Body of pancreas (tissue), 4 donors: ENCODE measurements at regions of chr16 and their contacts with region 1.

Region 1: DNA sequence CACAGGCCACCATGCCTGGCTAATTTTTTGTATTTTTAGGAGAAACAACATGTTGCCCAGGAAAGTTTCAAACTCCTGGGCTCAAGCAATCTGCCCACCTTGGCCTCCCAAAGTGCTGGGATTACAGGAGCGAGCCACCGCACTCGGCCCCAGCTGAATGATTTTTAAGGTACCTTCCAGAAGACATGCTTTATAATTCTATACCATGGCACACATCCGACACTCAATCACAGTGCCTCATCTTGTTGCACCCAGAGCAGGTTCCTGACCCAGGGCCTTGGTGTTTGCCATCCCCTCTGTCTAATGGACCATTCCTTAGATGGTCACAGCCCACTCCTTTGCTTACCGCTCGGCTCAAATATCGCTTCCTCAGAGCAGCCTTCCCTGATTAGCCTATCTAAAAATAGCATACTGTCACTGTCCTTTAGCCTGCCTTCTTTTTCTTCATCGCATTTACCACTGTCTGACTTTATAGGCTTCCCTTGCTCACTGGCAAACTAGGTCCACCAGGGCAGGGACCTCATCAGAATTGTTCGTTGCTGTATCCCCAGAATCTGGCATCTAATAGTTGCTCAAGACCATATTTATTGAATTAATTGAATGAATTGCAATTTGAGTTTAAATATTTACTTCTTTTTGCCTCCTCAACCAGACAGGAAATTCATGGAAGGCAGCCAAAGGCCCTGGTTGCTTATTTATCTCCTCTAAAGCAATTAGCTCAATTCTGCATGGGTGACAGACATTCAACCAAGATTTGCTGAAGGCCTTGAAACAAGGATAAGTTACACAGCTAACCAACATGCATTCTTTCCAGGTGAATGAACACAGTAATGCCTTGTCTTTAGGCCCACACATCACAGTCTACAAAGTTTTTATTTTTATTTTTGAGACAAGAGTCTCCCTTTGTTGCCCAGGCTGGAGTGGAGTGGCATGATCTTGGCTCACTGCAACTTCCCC is 6.3 kb upstream of the TENT4B start:
- DNase-seq: peak; percentile 25 to 52 (median 44)
- ATAC-seq: peak; percentile 85
- H3K4me3 ChIP-seq: no peak overlapping the region
- H3K27ac ChIP-seq: peak overlapping the region in 3 of 4 donors; percentile 42 to 74 (median 66)
- H3K4me1 ChIP-seq: peaks cover 22% of the 10 kb centered on the region
- H3K27me3 ChIP-seq: no peaks in the 10 kb centered on the region
- CTCF ChIP-seq: no peak
- POLR2A ChIP-seq: no peak

Region 2: DNA sequence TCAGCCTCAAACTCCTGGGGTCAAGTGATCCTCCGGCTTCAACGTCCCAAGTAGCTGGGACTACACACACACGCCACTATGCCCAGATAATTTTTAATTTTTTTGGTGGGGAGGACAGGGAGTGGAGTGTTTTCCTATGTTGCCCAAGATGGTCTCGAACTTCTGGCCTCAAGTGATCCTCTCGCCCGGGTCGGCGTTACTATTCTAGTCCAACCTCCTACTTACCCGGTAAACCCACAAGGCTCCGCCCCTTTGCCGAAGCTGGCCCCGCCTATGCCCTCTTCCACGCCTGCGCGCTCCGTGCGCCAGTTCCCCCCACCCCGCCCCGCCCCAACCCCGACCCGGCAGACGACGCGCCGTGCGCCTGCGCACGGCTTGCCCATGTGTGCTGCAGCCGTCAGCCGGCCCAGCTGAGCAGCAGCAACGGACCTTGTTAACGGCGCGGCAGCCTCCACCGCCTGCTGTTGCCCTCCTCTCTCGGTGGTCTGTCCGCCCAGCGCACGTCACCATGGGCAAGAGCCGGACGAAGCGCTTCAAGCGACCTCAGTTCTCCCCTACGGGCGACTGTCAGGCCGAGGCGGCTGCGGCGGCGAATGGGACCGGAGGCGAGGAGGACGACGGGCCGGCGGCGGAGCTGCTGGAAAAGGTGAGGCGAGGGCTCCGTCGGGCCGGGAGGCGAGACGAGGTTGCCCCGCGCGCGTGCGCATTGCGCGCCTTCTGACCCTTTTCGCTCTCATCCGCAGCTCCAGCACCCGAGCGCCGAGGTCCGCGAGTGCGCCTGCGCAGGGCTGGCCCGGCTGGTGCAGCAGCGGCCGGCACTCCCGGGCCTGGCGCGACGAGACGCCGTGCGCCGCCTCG is 80.9 kb before region 1 on chr16 and contains the start of gene HEATR3:
- intact Hi-C with region 1: loop called (anchors 10 kb)
- DNase-seq: peak; percentile 94 to 96 (median 94)
- ATAC-seq: peak; percentile 98
- H3K4me3 ChIP-seq: peak within 1 kb of the TSS; percentile 59 to 87
- H3K27ac ChIP-seq: peak within 1 kb of the TSS; percentile 62 to 95 (median 90)
- H3K4me1 ChIP-seq: peaks cover 17% of the 10 kb centered on the region
- H3K27me3 ChIP-seq: no peaks in the 10 kb centered on the region
- CTCF ChIP-seq: no peak
- POLR2A ChIP-seq: peak; percentile 35 to 78 (median 76)
- total RNA-seq, gene HEATR3: 17.4 to 25.7 TPM

Region 3: DNA sequence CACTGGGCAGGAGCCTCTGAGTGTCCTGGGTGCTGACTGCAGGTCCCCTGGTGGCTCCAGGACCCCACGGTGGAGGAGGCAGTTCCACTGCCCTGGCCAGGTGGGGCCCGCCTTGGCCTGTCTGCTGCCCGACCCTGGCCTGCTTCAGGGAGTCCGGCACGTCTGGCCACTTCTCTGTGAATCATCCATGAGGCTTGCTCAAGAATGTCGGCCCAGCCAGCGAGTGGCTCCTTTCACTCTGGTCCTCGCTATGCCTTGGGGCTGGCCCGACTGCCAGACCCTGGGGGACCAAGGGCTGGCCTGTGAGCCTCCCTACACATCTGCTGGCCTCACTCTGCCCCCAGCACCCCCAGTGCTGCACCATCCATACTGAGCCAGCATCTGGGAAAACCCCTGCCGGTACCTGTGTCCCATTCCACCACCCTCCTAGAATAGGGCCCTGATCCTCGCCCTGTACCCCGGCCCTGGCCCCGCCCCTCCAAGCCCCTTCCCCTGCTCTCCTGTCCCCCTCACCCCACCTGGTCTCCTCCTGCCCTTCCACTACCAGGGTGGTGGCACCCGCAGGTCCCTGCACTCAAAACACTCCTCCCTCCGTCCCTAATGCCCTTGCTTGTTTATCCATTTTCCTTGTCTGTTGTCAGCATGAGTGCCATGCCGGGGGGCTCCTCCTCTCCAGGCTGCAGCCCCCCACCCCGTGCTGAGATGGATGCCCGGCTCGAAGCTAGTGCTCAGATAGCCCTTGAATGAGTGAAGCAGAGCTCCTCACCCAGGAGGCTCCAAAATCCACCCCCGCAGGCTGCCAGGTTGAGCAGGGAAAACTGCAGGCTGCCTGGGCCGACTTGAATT is 155.1 kb after region 1 on chr16:
- intact Hi-C with region 1: no loop called
- DNase-seq: peak in 1 of 4 donors; percentile 10
- ATAC-seq: no peak
- H3K4me3 ChIP-seq: no peak overlapping the region
- H3K27ac ChIP-seq: no peak overlapping the region
- H3K4me1 ChIP-seq: no peaks in the 10 kb centered on the region
- H3K27me3 ChIP-seq: no peaks in the 10 kb centered on the region
- CTCF ChIP-seq: no peak
- POLR2A ChIP-seq: no peak

Region 4: DNA sequence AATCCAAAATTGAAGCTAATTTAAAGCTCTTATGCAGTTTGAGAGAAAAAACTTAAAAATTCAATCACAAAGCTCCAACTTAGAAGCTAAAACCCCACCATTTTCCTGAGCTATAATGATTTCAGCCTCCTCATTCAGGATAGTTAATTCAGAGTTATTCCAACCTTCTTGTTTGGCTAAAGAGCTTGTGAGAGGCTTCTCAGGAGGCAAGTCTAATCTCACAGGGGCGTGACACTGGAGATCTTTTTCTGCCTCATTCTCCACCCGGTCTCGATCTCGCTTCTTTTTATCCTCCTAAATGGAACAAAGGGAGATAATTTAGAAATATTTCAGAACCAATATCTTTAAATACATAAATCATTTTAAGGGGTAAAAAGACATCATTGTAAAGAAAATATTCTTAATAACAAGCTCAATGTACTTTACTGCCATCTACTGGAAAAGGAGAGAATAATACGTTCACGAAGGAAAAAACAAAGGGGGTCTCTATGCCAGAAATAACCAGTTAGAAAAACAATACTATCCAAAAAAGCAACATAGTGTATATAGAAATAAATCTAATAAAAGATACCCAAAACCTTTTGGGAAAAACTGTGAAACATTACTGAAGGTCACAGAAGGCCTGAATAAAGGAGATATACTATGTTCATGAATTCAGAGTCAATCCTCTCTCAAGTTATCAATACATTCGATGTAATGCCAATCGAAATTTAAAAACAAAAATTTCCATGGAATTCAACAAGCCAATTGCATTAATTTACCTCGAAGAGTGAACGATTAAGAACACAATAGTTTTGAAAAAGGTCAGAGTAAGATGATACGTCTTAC is 208.1 kb after region 1 on chr16:
- intact Hi-C with region 1: no loop called
- DNase-seq: no peak
- ATAC-seq: no peak
- H3K4me3 ChIP-seq: no peak overlapping the region
- H3K27ac ChIP-seq: no peak overlapping the region
- H3K4me1 ChIP-seq: peaks cover 4% of the 10 kb centered on the region
- H3K27me3 ChIP-seq: no peaks in the 10 kb centered on the region
- CTCF ChIP-seq: peak in 6 of 7 experiments; percentile 36 to 62 (median 48)
- POLR2A ChIP-seq: no peak